Transverse colon (tissue), 4 donors: ENCODE measurements at regions of chr1 and their contacts with region 1.

Region 1: DNA sequence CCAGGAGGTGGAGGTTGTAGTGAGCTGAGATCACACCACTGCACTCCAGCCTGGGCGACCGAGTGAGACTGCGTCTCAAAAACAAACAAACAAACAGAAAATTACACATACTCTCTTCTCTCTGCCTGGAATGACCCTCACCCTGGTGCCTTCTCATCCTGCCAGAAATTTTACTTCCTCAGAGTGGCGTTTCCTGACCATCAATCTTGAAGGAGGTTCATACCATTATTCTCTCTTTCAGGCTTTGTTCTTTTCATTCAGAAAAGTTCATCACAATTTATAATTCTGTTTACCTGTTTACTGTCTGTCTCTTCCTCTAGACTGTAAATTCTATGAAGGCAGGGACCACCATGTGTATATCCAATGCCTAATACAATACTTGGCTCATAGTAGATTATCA is 79.3 kb downstream of the RPS6KA1 start:
- DNase-seq: no peak
- H3K4me3 ChIP-seq: no peak overlapping the region
- H3K27ac ChIP-seq: no peak overlapping the region
- H3K4me1 ChIP-seq: no peaks in the 10 kb centered on the region
- H3K27me3 ChIP-seq: no peaks in the 10 kb centered on the region
- CTCF ChIP-seq: no peak
- EP300 ChIP-seq: no peak
- POLR2A ChIP-seq: no peak

Region 2: DNA sequence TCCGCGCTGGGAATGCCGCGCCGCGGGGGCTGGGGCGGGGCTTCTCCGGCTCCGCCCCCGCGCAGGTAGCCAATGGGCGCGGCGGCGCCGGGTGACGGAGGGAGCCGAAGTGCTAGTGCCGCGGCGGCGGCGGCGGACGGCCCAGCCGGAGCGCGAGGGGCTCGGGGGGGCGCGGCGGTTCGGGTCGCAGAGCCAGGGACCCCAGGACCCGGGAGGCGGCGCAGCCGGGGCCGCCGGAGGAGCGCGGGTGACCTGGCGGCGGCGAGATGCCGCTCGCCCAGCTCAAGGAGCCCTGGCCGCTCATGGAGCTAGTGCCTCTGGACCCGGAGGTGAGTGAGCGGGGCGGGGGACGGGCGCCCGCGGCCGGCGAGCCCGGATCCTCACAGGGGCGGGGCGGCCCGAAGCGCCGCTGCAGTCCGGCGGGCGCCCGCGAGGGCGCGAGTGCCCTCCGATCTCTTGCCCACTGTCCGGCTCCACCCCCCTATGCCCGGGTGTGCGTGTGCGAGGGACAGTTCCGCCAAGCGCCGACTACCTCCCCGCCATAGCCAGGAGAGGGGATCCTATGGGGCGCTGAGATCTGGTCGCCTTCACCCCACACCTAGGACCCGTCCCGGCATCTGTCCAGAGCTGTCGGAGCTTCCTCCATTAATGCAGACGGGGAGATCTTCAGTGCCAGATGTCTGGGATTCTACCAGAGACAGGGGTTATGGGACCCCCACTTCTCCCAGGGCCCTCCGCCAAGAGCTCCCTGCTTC is 79.1 kb before region 1 on chr1 and contains the start of gene RPS6KA1:
- in situ Hi-C with region 1: no loop called
- intact Hi-C with region 1: no loop called
- DNase-seq: peak; percentile 80
- H3K4me3 ChIP-seq: peak within 1 kb of the TSS; percentile 62 to 89 (median 75)
- H3K27ac ChIP-seq: peak within 1 kb of the TSS; percentile 86 to 94 (median 90)
- H3K4me1 ChIP-seq: peaks cover 14 to 56% (median 39%) of the 10 kb centered on the region in 4 donors
- H3K27me3 ChIP-seq: no peaks in the 10 kb centered on the region
- CTCF ChIP-seq: no peak
- EP300 ChIP-seq: no peak
- POLR2A ChIP-seq: peak; percentile 67
- total RNA-seq, gene RPS6KA1: 153 to 202 (median 174) TPM

Region 3: DNA sequence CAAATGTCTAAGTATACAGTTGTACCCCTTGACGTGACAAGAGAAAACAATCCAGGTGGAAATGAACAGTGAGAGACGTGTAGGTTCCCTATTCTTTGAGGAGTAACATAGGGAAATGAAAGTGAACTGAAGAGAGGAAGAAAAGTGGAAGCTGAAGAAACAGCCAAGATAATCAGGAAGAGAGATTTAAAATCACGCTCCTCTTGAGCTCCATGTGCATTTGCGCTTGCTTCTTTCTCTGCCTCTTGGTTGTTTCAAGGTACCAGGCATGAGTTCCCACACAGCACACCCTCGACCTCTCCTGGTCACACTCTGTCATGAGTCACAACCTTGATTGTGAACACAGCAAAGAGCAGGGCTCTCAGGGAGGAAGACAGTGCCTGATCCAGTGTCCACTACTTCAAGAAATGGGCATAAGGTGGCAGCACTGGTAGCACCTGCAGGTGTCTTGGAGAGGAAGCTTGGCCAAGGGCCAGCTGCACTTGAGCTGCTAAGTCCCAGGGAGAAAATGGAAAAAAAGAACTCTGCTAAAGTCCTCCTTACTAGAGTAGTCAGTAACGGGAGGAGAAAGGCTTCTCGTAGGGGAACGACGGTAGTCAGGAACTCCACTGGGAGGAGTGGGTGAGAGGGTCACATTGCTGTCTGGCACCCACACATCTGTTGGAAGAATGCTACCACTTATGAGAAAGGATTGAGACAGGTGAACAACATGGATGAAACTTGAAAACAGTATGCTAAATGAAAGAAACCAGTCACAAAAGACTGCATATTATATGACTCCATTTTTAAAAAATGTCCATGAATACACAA is 68.6 kb after region 1 on chr1:
- in situ Hi-C with region 1: loop called in 1 of 4 experiments (anchors 5 kb)
- intact Hi-C with region 1: loop called (anchors 5 kb)
- DNase-seq: peak; percentile 92
- H3K4me3 ChIP-seq: peak overlapping the region in 1 of 4 donors; percentile 17
- H3K27ac ChIP-seq: peak overlapping the region in 3 of 4 donors; percentile 10 to 38 (median 30)
- H3K4me1 ChIP-seq: peaks cover 0 to 13% (median 11%) of the 10 kb centered on the region in 4 donors
- H3K27me3 ChIP-seq: no peaks in the 10 kb centered on the region
- CTCF ChIP-seq: peak; percentile 61 to 94 (median 62)
- EP300 ChIP-seq: no peak
- POLR2A ChIP-seq: no peak

Region 4: GRCh38 chr1:27218736-27219135 is 609.8 kb after region 1 on chr1:
- in situ Hi-C with region 1: no loop called
- intact Hi-C with region 1: no loop called
- DNase-seq: no peak
- H3K4me3 ChIP-seq: no peak overlapping the region
- H3K27ac ChIP-seq: no peak overlapping the region
- H3K4me1 ChIP-seq: no peaks in the 10 kb centered on the region
- H3K27me3 ChIP-seq: no peaks in the 10 kb centered on the region
- CTCF ChIP-seq: no peak
- EP300 ChIP-seq: no peak
- POLR2A ChIP-seq: no peak